Ascending aorta (tissue), 2 donors: ENCODE measurements at regions of chr10 and their contacts with region 1.

Region 1: DNA sequence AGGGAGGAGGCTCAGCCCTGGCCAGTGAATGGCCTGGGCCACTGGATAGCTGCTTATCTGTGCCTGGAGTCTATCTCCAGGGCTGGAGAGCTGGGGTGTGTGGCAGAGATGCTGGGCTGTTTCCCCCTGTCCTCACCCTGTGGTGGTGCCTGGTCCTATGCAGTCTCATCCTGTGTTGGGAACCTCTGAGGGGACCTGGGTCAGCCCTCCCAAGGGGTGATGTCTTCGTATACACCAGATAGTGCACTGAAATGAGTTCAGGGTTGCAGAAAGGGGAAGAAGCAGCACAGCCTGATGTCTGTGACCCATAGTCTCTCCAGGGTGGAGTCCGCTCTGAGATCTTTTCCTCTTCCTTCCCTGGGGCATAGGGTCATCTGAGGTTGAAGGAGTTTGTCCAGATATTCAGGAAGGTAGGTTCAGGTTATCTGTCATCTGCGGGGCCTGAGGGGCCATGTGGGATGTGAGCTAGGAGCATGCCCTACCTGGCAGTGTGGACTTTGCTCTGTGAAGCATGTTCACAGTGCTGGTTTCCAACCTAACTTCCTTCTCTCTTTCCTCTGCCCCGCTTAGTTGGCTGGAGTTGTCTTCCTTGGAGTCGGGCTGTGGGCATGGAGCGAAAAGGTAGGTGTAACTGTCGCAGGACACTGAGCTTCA is 33.4 kb upstream of the SH2D4B start:
- DNase-seq: no peak
- H3K4me3 ChIP-seq: no peak overlapping the region
- H3K27ac ChIP-seq: peak overlapping the region; percentile 48 to 76
- H3K4me1 ChIP-seq: peaks cover 0 to 26% of the 10 kb centered on the region in 2 donors
- H3K27me3 ChIP-seq: no peaks in the 10 kb centered on the region
- CTCF ChIP-seq: no peak

Region 2: GRCh38 chr10:80444646-80445319 is 59.5 kb before region 1 on chr10:
- intact Hi-C with region 1: loop called (anchors 1 kb)
- DNase-seq: no peak
- H3K4me3 ChIP-seq: no peak overlapping the region
- H3K27ac ChIP-seq: no peak overlapping the region
- H3K4me1 ChIP-seq: no peaks in the 10 kb centered on the region
- H3K27me3 ChIP-seq: no peaks in the 10 kb centered on the region
- CTCF ChIP-seq: peak; percentile 19 to 68 (median 64)

Region 3: DNA sequence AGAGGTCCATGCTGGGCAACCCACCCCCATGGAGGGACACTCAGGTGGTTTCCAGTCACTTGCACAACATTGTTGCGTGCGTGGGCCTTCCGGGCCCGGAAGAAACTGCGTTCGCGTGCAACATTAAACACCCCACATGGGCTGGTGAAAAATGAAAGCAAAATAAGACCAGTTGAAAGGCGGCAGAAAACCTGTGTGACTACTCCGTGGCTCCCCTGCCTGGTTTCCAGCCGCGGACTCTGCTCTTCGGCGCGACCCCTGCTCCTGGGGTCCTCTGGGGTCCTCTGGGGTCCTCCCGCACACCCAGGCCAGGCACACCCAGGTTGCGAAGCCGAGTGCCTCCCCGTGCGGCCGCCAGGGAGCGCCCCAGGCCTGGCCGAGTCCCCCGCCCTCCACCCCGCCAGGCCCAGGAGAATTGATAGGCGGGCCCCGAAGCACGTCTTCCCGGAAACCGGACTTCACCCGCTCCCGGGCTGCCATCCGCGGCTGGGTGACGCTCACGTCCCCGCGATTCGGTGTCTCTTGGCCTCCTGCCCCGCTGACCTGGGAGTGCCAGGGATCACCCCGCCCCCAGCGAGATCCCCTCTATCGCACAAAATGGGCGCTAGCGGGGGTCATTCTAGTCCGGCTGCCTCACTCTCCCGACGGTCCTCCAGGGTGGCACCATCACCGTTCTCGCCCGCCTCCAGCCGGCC is 31.5 kb after region 1 on chr10:
- intact Hi-C with region 1: no loop called
- DNase-seq: peak in 1 of 2 donors; percentile 70
- H3K4me3 ChIP-seq: peak overlapping the region; percentile 46 to 67
- H3K27ac ChIP-seq: peak overlapping the region; percentile 30 to 44
- H3K4me1 ChIP-seq: no peaks in the 10 kb centered on the region
- H3K27me3 ChIP-seq: no peaks in the 10 kb centered on the region
- CTCF ChIP-seq: peak; percentile 46 to 59 (median 50)